SK-N-SH (cell line): ENCODE measurements at regions of chr11 and their contacts with region 1.

Region 1: DNA sequence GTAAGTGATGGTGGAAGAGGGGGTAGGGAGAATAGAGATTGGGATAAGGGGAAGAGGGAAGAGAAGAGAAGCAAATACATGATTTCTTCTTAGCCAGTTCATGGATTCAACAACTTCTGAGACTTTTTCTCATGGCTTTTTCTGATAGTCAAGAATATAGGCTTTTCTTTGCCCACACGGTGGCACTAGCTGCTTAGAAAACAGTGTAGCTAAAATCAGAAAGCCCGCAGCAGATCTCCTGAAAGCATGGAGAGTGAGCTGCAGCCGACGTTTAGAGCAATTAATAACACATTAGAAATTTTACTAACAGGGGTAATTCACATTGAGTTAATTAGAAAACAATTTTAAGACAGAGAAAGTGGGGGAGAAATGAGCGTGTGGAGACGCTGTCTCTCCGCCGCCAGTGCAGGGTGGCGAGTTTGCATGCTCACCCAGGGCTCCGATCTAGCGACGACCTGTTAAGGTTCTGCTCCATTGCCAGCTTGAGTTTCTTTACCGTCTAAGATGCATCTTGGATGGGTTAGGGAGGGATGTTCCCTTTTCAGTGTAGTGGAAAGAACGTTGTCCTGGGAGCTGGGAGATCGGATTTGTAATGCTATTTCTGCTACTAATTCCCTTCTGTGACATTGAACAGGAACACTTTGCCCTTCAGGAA is 3.3 kb upstream of the RAG1 start:
- DNase-seq: peak; percentile 70
- H3K4me3 ChIP-seq: peak overlapping the region; percentile 48 to 67
- H3K27ac ChIP-seq: peak overlapping the region in 1 of 2 experiments; percentile 100; a peak in 2 of 4 replicates
- H3K4me1 ChIP-seq: peaks cover 0 to 27% of the 10 kb centered on the region in 2 experiments; a peak in 2 of 4 replicates
- H3K27me3 ChIP-seq: no peaks in the 10 kb centered on the region
- CTCF ChIP-seq: peak; percentile 91
- EP300 ChIP-seq: no peak
- RAD21 ChIP-seq: peak; percentile 93

Region 2: GRCh38 chr11:36289226-36289852 is 275.2 kb before region 1 on chr11 and contains the start of gene COMMD9:
- CTCF ChIA-PET with region 1: interaction called, 12 read pairs
- POLR2A ChIA-PET with region 1: no interaction called
- DNase-seq: peak; percentile 92
- H3K4me3 ChIP-seq: peak within 1 kb of the TSS; percentile 66 to 89
- H3K27ac ChIP-seq: peak within 1 kb of the TSS in 1 of 2 experiments; percentile 32; a peak in 1 of 4 replicates
- H3K4me1 ChIP-seq: peaks cover 3 to 13% of the 10 kb centered on the region in 2 experiments; a peak in 3 of 4 replicates
- H3K27me3 ChIP-seq: no peaks in the 10 kb centered on the region
- CTCF ChIP-seq: no peak
- EP300 ChIP-seq: no peak
- RAD21 ChIP-seq: no peak
- polyA plus RNA-seq, gene COMMD9: 44.2 and 48.2 TPM in 2 replicates

Region 3: DNA sequence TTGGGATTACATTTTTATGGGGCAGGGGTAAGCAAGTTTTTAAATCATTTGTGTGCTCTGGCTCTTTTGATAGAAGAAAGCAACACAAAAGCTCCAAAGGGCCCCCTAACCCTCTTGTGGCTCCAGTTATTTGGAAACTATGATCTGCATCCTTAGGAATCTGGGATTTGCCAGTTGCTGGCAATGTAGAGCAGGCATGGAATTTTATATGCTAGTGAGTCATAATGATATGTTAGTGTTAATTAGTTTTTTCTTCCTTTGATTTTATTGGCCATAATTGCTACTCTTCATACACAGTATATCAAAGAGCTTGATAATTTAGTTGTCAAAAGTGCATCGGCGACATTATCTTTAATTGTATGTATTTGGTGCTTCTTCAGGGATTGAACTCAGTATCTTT is 13.4 kb after region 1 on chr11:
- CTCF ChIA-PET with region 1: interaction called, 58 read pairs
- POLR2A ChIA-PET with region 1: interaction called, 3 read pairs
- DNase-seq: no peak
- H3K4me3 ChIP-seq: no peak overlapping the region
- H3K27ac ChIP-seq: peak overlapping the region; percentile 60 to 87
- H3K4me1 ChIP-seq: peaks cover 23 to 30% of the 10 kb centered on the region in 2 experiments; a peak in 3 of 4 replicates
- H3K27me3 ChIP-seq: no peaks in the 10 kb centered on the region
- CTCF ChIP-seq: no peak
- EP300 ChIP-seq: peak in 1 of 2 experiments; percentile 78; a peak in 1 of 4 replicates
- RAD21 ChIP-seq: no peak

Region 4: DNA sequence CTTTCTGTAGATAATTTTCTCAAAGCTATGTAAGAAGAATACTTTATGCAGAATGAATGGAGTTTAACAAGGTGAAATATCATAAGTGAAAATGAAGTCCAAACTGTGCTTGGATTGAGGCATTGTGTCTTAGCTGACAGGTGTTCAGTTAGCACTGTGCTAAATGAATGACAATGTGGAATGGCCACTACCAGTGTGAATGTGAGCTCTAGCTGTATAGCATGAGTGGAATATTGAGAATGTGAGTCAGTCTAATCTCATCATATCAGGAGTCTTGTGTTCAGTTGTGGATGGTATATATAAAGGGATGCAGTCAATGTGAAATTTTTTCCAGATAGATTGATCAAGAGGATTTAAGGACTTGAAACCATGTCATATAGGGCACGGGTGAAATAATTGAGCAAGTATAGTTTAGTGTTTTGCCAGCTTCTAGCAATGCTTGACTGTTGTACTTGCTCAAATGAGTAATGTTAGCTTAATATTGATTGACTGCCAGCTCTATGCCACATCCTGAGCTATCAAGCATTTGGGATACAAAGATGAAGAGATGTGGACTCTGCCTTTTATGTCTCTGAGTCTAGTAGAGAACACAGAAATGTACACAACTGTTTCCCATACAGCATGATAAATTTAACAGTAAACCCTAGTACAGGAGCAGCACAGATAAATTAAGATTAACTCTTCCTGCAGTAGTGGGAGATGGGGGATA is 44.1 kb after region 1 on chr11:
- CTCF ChIA-PET with region 1: interaction called, 18 read pairs
- POLR2A ChIA-PET with region 1: no interaction called
- DNase-seq: no peak
- H3K4me3 ChIP-seq: no peak overlapping the region
- H3K27ac ChIP-seq: peak overlapping the region in 1 of 2 experiments; percentile 85; a peak in 2 of 4 replicates
- H3K4me1 ChIP-seq: peaks cover 0 to 21% of the 10 kb centered on the region in 2 experiments; a peak in 2 of 4 replicates
- H3K27me3 ChIP-seq: no peaks in the 10 kb centered on the region
- CTCF ChIP-seq: no peak
- EP300 ChIP-seq: no peak
- RAD21 ChIP-seq: no peak

Region 5: GRCh38 chr11:36657610-36658267 is 93.2 kb after region 1 on chr11:
- CTCF ChIA-PET with region 1: interaction called, 13 read pairs
- POLR2A ChIA-PET with region 1: no interaction called
- DNase-seq: no peak
- H3K4me3 ChIP-seq: no peak overlapping the region
- H3K27ac ChIP-seq: no peak overlapping the region; a peak in 1 of 4 replicates
- H3K4me1 ChIP-seq: peaks cover 2 to 9% of the 10 kb centered on the region in 2 experiments; a peak in 3 of 4 replicates
- H3K27me3 ChIP-seq: no peaks in the 10 kb centered on the region
- CTCF ChIP-seq: no peak
- EP300 ChIP-seq: no peak
- RAD21 ChIP-seq: no peak

Region 6: GRCh38 chr11:36702330-36703055 is 138.0 kb after region 1 on chr11:
- CTCF ChIA-PET with region 1: interaction called, 79 read pairs
- POLR2A ChIA-PET with region 1: interaction called, 5 read pairs
- DNase-seq: peak; percentile 73
- H3K4me3 ChIP-seq: peak overlapping the region in 1 of 2 experiments; percentile 33; a peak in 1 of 4 replicates
- H3K27ac ChIP-seq: peak overlapping the region in 1 of 2 experiments; percentile 58; a peak in 2 of 4 replicates
- H3K4me1 ChIP-seq: peaks cover 0 to 3% of the 10 kb centered on the region in 2 experiments; a peak in 2 of 4 replicates
- H3K27me3 ChIP-seq: peaks cover under 1% of the 10 kb centered on the region; the same call in 1 of the 2 replicates
- CTCF ChIP-seq: peak; percentile 92
- EP300 ChIP-seq: 0 out of 4 replicates have a peak, but pooled peaks of 1 of the 2 experiments have one; percentile 12
- RAD21 ChIP-seq: peak; percentile 99